ENCODE measurements at regions of chr17 and their contacts with region 1.

Region 1: DNA sequence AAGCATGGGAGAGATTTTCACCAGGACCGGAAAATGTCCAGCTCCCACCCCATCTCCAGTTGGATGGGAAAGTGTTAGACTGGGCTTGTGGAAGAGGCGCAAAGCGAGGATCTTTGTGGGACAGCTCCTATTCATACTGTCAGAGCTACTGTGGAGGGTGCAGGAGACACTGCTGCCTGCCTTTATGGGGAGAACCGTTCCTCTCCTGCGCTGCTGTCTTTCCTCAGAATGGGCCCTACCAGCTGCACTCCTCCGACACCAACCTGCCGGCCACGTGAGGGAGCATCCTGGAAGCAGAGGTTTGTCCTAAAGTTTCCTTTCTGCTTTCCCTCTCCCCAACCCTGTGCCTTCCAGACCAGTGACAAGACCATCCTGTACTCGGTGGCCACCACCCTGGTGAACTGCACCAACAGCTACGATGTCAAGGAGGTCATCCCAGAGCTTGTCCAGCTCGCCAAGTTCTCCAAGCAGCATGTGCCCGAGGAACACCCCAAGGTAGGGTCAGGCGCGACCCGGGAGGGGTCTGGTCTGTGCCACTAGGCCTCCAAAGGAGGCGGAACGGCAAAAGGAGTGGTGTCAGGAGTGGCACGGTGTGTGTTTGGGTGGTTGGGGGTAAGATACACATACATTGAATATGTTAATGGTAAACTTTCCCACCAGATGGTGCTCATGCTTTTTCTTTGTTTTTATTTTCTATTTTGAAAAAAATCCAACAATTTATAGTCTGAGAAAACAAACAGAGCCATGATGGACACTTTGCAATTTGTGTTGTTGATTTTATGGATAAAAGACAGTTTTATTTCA is 23.0 kb downstream of the SLC35G3 start:
- DNase-seq: peak; percentile 20 to 71
- ATAC-seq: peak; percentile 69 to 87 (median 83)
- H3K4me3 ChIP-seq: no peak overlapping the region
- H3K4me3 Mint-ChIP-seq: peak overlapping the region; percentile 4
- H3K27ac ChIP-seq: no peak overlapping the region
- H3K27ac Mint-ChIP-seq: peak overlapping the region in 1 of 2 donors; percentile 72
- H3K4me1 ChIP-seq: peaks cover 12% of the 10 kb centered on the region
- H3K4me1 Mint-ChIP-seq: peaks cover 10 to 32% of the 10 kb centered on the region in 2 donors
- H3K27me3 ChIP-seq: no peaks in the 10 kb centered on the region
- H3K27me3 Mint-ChIP-seq: no peaks in the 10 kb centered on the region
- CTCF ChIP-seq: peak; percentile 66

Region 2: GRCh38 chr17:35189291-35189690 is 18.1 kb after region 1 on chr17:
- intact Hi-C with region 1: no loop called
- DNase-seq: no peak
- ATAC-seq: no peak
- H3K4me3 ChIP-seq: no peak overlapping the region
- H3K4me3 Mint-ChIP-seq: no peak overlapping the region
- H3K27ac ChIP-seq: no peak overlapping the region
- H3K27ac Mint-ChIP-seq: no peak overlapping the region
- H3K4me1 ChIP-seq: peaks cover 10% of the 10 kb centered on the region
- H3K4me1 Mint-ChIP-seq: peaks cover 47 to 50% of the 10 kb centered on the region in 2 donors
- H3K27me3 ChIP-seq: no peaks in the 10 kb centered on the region
- H3K27me3 Mint-ChIP-seq: no peaks in the 10 kb centered on the region
- CTCF ChIP-seq: no peak

Region 3: GRCh38 chr17:35214631-35215273 is 43.6 kb after region 1 on chr17:
- intact Hi-C with region 1: loop called (anchors 5 kb)
- DNase-seq: peak in 1 of 2 donors; percentile 62
- ATAC-seq: peak; percentile 36 to 56 (median 48)
- H3K4me3 ChIP-seq: no peak overlapping the region
- H3K4me3 Mint-ChIP-seq: peak overlapping the region; percentile 68
- H3K27ac ChIP-seq: peak overlapping the region; percentile 93
- H3K27ac Mint-ChIP-seq: peak overlapping the region; percentile 85 to 92
- H3K4me1 ChIP-seq: peaks cover 51% of the 10 kb centered on the region
- H3K4me1 Mint-ChIP-seq: peaks cover 69 to 79% of the 10 kb centered on the region in 2 donors
- H3K27me3 ChIP-seq: no peaks in the 10 kb centered on the region
- H3K27me3 Mint-ChIP-seq: no peaks in the 10 kb centered on the region
- CTCF ChIP-seq: no peak

Region 4: GRCh38 chr17:35747540-35748017 is 576.4 kb after region 1 on chr17:
- intact Hi-C with region 1: loop called (anchors 1 kb)
- DNase-seq: peak; percentile 76 to 91
- ATAC-seq: peak; percentile 88 to 99 (median 99)
- H3K4me3 ChIP-seq: no peak overlapping the region
- H3K4me3 Mint-ChIP-seq: no peak overlapping the region
- H3K27ac ChIP-seq: no peak overlapping the region
- H3K27ac Mint-ChIP-seq: no peak overlapping the region
- H3K4me1 ChIP-seq: peaks cover 6% of the 10 kb centered on the region
- H3K4me1 Mint-ChIP-seq: peaks cover 0 to 4% of the 10 kb centered on the region in 2 donors
- H3K27me3 ChIP-seq: peaks cover 17% of the 10 kb centered on the region
- H3K27me3 Mint-ChIP-seq: peaks cover 42 to 43% of the 10 kb centered on the region in 2 donors
- CTCF ChIP-seq: peak; percentile 91